IMR-90 (cell line): ENCODE measurements at regions of chr3 and their contacts with region 1.

Region 1: DNA sequence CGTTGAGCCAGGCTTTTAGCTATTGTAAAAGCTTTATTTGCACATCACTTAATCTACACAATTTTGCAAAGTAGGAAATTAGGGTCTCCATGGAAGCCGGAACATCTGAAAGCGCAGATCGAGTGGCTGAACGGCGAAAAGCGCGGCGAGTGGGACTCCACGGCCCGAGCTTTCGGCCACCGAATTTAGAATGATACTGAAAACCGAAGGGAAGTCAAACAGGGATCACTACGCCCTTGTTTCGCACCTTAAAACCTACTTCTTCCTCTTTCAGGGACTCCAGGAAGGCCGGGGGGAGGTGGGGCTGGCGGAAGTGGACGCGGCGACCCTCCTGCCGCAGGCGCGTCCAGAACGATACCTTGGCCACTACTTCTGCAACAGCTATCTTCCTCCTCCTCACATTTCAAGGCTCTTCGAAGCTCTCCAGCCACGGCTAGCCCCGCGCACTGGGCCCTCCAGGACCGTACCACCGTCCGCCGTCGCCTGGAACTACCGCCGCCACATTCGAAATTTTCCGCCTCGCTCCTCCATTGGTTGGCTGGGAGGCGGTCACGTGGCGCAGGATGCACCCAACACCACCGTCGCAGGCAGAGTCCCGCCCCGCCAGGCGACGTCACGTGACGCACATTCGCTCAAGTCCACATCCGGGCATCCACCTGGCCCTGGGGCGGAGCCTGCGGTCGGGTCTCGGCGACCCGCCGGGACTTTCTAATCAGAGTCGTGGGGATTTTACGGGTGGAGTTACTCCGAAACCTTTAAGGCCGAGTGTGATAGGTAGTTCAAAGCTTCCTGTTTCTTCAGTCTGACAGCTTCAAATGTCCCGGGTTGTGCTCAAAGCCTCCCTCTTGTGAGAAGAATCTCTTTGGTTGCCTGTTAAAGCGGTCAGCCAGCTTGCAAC is at the start of gene SGO1:
- DNase-seq: peak; percentile 96
- ATAC-seq: peak; percentile 96
- H3K4me3 ChIP-seq: peak within 1 kb of the TSS; percentile 89
- H3K27ac ChIP-seq: peak within 1 kb of the TSS; percentile 93
- H3K4me1 ChIP-seq: no peaks in the 10 kb centered on the region
- H3K27me3 ChIP-seq: no peaks in the 10 kb centered on the region
- CTCF ChIP-seq: no peak
- POLR2A ChIP-seq: peak; percentile 90
- RAD21 ChIP-seq: no peak
- total RNA-seq, gene SGO1: 5.2 and 8.1 TPM in 2 replicates

Region 2: DNA sequence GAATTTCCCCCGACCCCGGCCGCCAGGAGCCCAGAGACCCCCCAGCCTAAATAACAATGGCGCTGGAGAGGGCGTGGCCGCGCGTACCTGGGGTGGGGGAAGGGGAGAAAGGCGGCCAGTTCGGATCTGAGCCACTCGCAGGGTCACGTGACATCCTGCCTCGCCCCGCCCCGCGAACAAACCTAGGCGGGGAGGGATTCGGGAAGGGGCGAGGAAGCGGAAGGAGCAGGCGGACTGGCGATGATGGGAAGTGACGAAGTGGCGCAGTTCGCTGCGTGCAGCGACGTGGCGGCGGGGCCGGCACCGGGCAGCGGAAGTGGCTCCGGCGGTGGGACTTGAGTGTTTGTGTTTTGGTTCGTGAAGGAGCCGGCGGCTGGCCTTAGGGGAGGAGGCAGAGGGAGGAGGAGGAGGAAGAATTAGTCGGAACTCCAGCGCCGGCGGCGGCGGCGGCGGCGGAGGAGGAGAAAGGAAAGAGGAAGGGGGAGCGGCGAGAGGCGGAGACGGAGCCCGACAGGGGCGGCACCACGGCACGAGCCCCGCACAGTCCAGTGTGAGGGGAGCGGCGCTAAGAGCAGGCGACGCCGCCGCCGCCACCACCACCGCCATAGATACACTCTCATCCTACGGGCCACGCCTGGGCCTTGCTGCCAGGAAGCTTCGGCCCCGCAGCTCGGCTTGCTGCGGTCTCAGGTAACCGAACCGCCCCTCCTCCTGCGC is 239.0 kb before region 1 on chr3 and contains the start of gene RAB5A:
- CTCF ChIA-PET with region 1: no interaction called
- POLR2A ChIA-PET with region 1: no interaction called
- dilution Hi-C with region 1: no loop called
- in situ Hi-C with region 1: loop called (anchors 10 kb)
- intact Hi-C with region 1: loop called (anchors 5 kb)
- DNase-seq: peak; percentile 98
- ATAC-seq: peak; percentile 91
- H3K4me3 ChIP-seq: peak within 1 kb of the TSS; percentile 95
- H3K27ac ChIP-seq: peak within 1 kb of the TSS; percentile 88
- H3K4me1 ChIP-seq: peaks cover 6% of the 10 kb centered on the region; the same call in 1 of the 2 replicates
- H3K27me3 ChIP-seq: no peaks in the 10 kb centered on the region
- CTCF ChIP-seq: no peak
- POLR2A ChIP-seq: peak; percentile 87
- RAD21 ChIP-seq: no peak
- total RNA-seq, gene RAB5A: 46.4 and 82.8 TPM in 2 replicates

Region 3: GRCh38 chr3:19967812-19968211 is 218.1 kb before region 1 on chr3:
- CTCF ChIA-PET with region 1: no interaction called
- POLR2A ChIA-PET with region 1: no interaction called
- dilution Hi-C with region 1: no loop called
- in situ Hi-C with region 1: no loop called
- intact Hi-C with region 1: loop called (anchors 5 kb)
- DNase-seq: no peak
- ATAC-seq: no peak
- H3K4me3 ChIP-seq: no peak overlapping the region
- H3K27ac ChIP-seq: no peak overlapping the region
- H3K4me1 ChIP-seq: peaks cover 3% of the 10 kb centered on the region
- H3K27me3 ChIP-seq: no peaks in the 10 kb centered on the region
- CTCF ChIP-seq: no peak
- POLR2A ChIP-seq: no peak
- RAD21 ChIP-seq: no peak